ENCODE measurements at regions of chr10 and their contacts with region 1.

Region 1: GRCh38 chr10:93482145-93482834 is at the start of gene MYOF:
- DNase-seq: peak; percentile 70
- H3K4me3 Mint-ChIP-seq: peak within 1 kb of the TSS; percentile 75
- H3K27ac Mint-ChIP-seq: peak within 1 kb of the TSS; percentile 82
- H3K4me1 Mint-ChIP-seq: peaks cover 13% of the 10 kb centered on the region
- H3K27me3 Mint-ChIP-seq: peaks cover 9% of the 10 kb centered on the region
- total RNA-seq, gene MYOF: 1.4 to 2.7 TPM

Region 2: DNA sequence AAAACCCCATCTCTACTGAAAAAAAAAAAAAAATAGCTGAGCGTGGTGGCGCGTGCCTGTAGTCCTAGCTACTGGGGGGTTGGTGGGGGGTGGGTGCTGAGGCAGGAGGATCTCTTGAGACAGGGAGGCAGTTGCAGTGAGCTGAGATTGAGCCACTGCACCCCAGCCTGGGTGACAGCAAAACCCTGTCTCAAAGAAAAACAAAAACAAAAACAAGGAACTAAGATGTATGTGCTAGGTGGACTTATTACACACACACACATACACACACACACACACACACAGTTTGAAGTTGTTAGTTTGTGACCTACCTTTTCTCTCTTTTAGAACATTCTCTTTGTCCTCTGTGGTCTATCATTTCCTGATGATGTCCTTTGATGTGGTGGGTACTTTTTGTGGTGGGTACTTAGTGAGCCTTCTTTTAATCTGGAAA is 580.5 kb before region 1 on chr10:
- CTCF ChIA-PET with region 1: no interaction called
- POLR2A ChIA-PET with region 1: interaction called, 13 read pairs
- DNase-seq: peak; percentile 64
- H3K4me3 Mint-ChIP-seq: peak overlapping the region; percentile 37
- H3K27ac Mint-ChIP-seq: peak overlapping the region; percentile 71
- H3K4me1 Mint-ChIP-seq: peaks cover 17% of the 10 kb centered on the region
- H3K27me3 Mint-ChIP-seq: no peaks in the 10 kb centered on the region

Region 3: GRCh38 chr10:93165367-93165766 is 316.9 kb before region 1 on chr10:
- CTCF ChIA-PET with region 1: no interaction called
- POLR2A ChIA-PET with region 1: no interaction called
- DNase-seq: no peak
- H3K4me3 Mint-ChIP-seq: no peak overlapping the region
- H3K27ac Mint-ChIP-seq: no peak overlapping the region
- H3K4me1 Mint-ChIP-seq: no peaks in the 10 kb centered on the region
- H3K27me3 Mint-ChIP-seq: peaks cover 4% of the 10 kb centered on the region

Region 4: DNA sequence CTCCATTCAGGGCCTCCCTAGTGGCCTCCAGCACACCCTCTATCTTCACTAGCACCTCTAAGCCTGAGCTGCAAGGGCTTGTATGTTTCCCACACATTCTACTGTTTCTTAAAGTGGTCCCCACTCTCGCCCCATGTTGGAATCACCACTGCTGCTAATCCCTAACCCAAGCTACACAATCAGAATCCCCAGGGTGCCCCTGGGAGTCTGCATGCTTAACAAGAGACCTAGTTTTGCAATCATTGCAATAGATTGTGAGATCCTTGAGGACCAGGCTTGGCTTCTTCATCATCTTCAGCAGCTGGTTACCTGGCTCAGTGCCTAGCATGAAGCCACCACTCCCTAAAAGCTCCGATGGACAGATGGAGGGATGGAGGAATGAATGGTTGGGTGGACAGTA is 114.1 kb before region 1 on chr10:
- CTCF ChIA-PET with region 1: interaction called, 24 read pairs
- POLR2A ChIA-PET with region 1: no interaction called
- DNase-seq: no peak
- H3K4me3 Mint-ChIP-seq: no peak overlapping the region
- H3K27ac Mint-ChIP-seq: no peak overlapping the region
- H3K4me1 Mint-ChIP-seq: peaks cover 11% of the 10 kb centered on the region
- H3K27me3 Mint-ChIP-seq: no peaks in the 10 kb centered on the region

Region 5: GRCh38 chr10:93386631-93387369 is 95.5 kb before region 1 on chr10:
- CTCF ChIA-PET with region 1: interaction called, 19 read pairs
- POLR2A ChIA-PET with region 1: no interaction called
- DNase-seq: peak; percentile 21
- H3K4me3 Mint-ChIP-seq: peak overlapping the region; percentile 1
- H3K27ac Mint-ChIP-seq: peak overlapping the region; percentile 92
- H3K4me1 Mint-ChIP-seq: peaks cover 29% of the 10 kb centered on the region
- H3K27me3 Mint-ChIP-seq: no peaks in the 10 kb centered on the region

Region 6: GRCh38 chr10:93496322-93497041 is 14.2 kb after region 1 on chr10 and contains the start of gene CEP55:
- CTCF ChIA-PET with region 1: interaction called, 24 read pairs
- POLR2A ChIA-PET with region 1: interaction called, 3 read pairs
- DNase-seq: peak; percentile 97
- H3K4me3 Mint-ChIP-seq: peak within 1 kb of the TSS; percentile 95
- H3K27ac Mint-ChIP-seq: peak within 1 kb of the TSS; percentile 96
- H3K4me1 Mint-ChIP-seq: peaks cover 45% of the 10 kb centered on the region
- H3K27me3 Mint-ChIP-seq: no peaks in the 10 kb centered on the region
- total RNA-seq, gene CEP55: 77.5 to 92.3 TPM